Activated T-helper 2 cell treated with anti-CD3 and anti-CD28 coated beads, Interferon-gamma antibody, Interleukin-2, Interleukin-4, amounts not matched to agents 10 μg/mL and 5 μg/mL and 100 μg/mL, durations not matched to agents 14 hours and 24 hours and 36 hours (primary cell): ENCODE measurements at regions of chr4 and their contacts with region 1.

Region 1: DNA sequence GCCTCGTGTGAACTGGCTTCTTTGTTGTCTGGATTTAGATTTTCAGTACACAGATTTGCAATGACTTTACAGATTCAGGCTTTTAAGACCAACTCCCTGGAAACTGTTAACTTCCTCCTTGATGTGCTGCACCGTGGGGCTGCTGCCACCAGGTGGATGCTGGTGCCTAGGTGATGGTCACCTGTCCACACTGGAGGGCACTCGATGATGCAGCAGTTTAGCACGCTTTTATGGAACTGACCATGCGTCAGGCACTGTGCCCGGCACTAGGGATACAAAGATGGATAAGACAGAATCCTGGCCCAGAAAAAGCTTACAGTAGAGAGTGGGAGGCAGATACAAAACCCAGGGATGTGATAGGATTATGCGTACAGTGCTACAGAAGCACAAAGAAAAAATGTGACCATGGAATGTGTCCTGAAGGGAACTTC is 180.7 kb downstream of the CEP135 start:
- DNase-seq: no peak
- H3K4me3 Mint-ChIP-seq: no peak overlapping the region
- H3K27ac Mint-ChIP-seq: no peak overlapping the region
- H3K4me1 Mint-ChIP-seq: peaks cover 2% of the 10 kb centered on the region
- H3K27me3 Mint-ChIP-seq: no peaks in the 10 kb centered on the region

Region 2: DNA sequence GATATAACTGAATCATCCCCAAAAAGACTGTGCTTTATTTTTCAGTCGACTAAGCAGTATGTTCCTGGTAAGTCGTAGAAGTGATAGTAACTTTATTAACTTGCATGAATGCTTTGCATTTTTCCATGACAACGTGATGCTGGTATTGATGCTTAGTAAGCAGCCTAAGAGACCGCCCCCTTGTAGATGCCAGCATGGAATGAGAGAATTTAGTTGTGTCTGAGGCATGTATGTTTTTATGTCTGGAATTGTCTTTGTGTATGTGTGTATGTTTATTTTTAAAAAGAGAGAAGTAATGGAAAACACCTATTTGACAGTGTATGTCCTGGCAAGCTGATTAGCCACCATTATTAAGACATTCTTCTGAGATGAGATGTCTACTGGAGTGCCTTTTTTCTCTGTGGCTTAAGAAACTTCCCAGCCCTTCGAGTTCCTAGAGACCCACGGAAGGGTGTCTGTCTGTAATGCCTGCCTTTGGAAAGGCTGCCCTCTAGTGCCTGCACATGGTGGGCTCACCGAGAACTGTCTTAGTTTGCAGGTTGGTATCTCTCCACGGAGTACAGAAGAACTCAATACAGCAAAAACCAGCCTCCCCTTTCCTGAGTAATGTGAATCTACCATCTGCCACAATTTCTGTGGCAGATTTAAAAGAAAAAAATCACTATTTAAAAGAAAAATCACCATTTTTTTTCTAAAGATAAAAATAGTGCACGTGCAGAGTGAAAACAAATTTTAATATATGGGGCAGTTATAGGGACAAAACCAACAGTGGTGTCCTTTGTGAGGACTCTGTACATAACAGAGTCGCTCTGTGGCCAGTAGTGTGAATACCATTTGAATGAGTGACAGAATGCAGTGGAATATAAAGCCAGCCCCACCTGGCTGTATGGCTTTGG is 172.0 kb after region 1 on chr4:
- intact Hi-C with region 1: loop called (anchors 1 kb)
- DNase-seq: peak; percentile 55
- H3K4me3 Mint-ChIP-seq: peak overlapping the region; percentile 15
- H3K27ac Mint-ChIP-seq: no peak overlapping the region
- H3K4me1 Mint-ChIP-seq: peaks cover 12% of the 10 kb centered on the region
- H3K27me3 Mint-ChIP-seq: peaks cover 15% of the 10 kb centered on the region